ENCODE measurements at regions of chr12 and their contacts with region 1.

Region 1: GRCh38 chr12:12398026-12398859 is 41.4 kb downstream of the BORCS5 start:
- DNase-seq: peak; percentile 35 to 90
- H3K4me3 ChIP-seq: no peak overlapping the region
- H3K27ac ChIP-seq: peak overlapping the region; percentile 51
- H3K4me1 ChIP-seq: peaks cover 27% of the 10 kb centered on the region
- H3K27me3 ChIP-seq: no peaks in the 10 kb centered on the region
- CTCF ChIP-seq: no peak

Region 2: DNA sequence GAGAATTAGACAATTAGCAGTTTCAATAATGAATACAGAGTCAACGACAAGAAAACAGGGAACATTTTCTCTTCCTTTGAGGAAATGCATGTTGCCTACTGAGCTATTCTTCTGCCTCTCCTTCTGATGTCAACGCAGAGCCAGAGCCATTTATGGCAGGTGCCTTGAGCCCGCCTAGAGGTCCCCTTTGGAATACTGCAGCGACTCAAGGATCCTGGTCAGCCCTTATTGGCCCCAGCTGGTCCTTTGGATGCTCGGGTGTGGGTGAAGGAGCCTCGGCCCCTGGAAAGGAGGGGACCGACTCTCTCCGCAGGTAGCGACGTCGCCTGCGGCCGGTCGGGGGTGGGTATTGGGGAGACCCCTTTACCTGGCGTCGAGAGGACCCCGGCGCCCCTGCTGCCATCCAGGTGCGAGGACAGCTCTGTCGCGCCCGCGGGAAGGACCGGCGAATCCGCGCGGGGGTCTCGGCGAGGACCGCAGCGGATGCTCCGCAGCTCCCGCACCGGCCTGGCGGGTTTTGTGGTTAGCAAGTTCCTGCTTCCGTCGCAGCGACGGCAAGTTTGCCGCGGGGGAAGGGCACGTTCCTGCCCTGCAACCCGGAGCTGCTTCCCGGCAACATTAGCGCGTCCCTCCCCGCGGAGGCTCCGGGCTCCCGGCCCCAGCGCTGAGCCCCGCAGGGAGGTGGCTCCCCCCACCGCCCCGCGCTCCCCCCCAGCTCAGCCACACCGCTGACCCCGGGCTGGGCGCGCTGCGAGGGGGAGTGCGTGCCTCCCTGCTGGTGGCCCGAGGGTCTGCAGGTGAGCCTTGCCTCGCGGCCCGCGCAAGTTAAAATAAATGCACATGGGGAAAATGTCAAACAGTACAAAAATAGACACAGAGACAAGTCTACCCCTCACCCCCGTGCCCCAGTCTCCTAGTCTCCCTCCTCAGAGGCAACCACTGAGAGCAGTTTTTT is 48.3 kb before region 1 on chr12 and contains the start of gene MANSC1:
- CTCF ChIA-PET with region 1: interaction called, 16 read pairs
- POLR2A ChIA-PET with region 1: no interaction called
- intact Hi-C with region 1: no loop called
- DNase-seq: peak; percentile 60 to 71
- H3K4me3 ChIP-seq: peak within 1 kb of the TSS; percentile 85
- H3K27ac ChIP-seq: peak within 1 kb of the TSS; percentile 92
- H3K4me1 ChIP-seq: peaks cover 37% of the 10 kb centered on the region
- H3K27me3 ChIP-seq: no peaks in the 10 kb centered on the region
- CTCF ChIP-seq: peak; percentile 45; the same call in 1 of the 2 replicates
- total RNA-seq, gene MANSC1: 25.5 and 32.0 TPM in 2 replicates